Calu3 (cell line): ENCODE measurements at regions of chr3 and their contacts with region 1.

Region 1: GRCh38 chr3:53044711-53045517 is 959 bp downstream of the SFMBT1 start:
- DNase-seq: peak; percentile 63
- H3K4me3 Mint-ChIP-seq: peak overlapping the region; percentile 88
- H3K27ac Mint-ChIP-seq: no peak overlapping the region
- H3K4me1 Mint-ChIP-seq: peaks cover 17% of the 10 kb centered on the region
- H3K27me3 Mint-ChIP-seq: no peaks in the 10 kb centered on the region
- CTCF ChIP-seq: no peak

Region 2: GRCh38 chr3:52998730-52999509 is 46.0 kb before region 1 on chr3:
- CTCF ChIA-PET with region 1: interaction called, 3 read pairs
- intact Hi-C with region 1: loop called (anchors 5 kb)
- DNase-seq: peak; percentile 95
- H3K4me3 Mint-ChIP-seq: peak overlapping the region; percentile 90
- H3K27ac Mint-ChIP-seq: peak overlapping the region; percentile 98
- H3K4me1 Mint-ChIP-seq: peaks cover 24% of the 10 kb centered on the region
- H3K27me3 Mint-ChIP-seq: no peaks in the 10 kb centered on the region
- CTCF ChIP-seq: no peak

Region 3: GRCh38 chr3:53026382-53027162 is 18.3 kb before region 1 on chr3:
- CTCF ChIA-PET with region 1: no interaction called
- intact Hi-C with region 1: loop called (anchors 2 kb)
- DNase-seq: no peak
- H3K4me3 Mint-ChIP-seq: no peak overlapping the region
- H3K27ac Mint-ChIP-seq: no peak overlapping the region
- H3K4me1 Mint-ChIP-seq: peaks cover 8% of the 10 kb centered on the region
- H3K27me3 Mint-ChIP-seq: no peaks in the 10 kb centered on the region
- CTCF ChIP-seq: no peak